K562 (cell line): ENCODE measurements at regions of chr3 and their contacts with region 1.

Region 1: DNA sequence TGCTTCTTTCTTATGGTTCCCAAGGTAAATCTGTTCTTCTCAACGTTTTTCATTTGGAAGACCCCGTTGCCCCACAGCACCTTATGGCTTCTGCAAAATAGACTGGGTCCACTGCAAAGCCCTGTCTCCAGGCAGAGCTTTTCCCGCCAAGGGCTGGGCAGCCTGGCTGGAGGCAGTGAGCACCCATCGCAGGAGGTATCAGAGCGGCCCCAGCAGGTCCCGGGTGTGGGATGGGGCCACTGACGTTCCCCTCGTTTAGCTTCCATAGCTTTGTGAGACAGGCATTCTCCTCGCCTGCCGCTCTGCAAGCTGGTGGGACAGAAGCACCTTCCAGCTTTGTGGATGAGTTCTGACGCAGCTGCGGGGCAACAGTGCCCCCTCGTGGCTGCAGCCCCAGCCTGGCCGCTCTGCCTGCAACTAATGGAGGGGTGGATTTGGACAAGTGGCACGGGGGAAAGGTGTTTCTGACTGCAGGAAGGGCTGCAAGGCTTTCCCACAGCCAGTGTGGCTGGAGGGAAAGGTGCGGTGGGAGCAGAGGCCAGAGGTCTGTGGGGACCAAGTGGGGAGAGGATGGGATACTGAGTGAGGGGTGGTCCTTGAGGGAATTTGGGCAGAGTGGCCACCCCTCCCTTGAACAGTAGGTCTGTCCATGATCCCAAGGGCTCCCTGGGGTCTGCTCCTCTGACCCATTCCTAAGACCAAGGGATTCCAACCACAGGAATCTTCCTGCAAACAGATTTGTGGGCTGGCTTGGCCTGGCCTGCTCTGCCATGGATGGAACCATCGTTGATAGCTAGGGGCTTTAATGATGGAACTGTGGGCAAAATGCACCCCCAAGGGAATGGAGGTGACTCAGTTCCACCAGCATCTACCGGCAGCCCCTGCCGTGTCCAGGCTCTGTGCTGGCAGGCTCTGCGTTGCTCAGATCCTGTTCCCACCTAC is 99.4 kb downstream of the FBLN2 start:
- DNase-seq: peak; percentile 89 to 93 (median 92)
- ATAC-seq: peak; percentile 76
- H3K4me3 ChIP-seq: no peak overlapping the region
- H3K27ac ChIP-seq: no peak overlapping the region
- H3K4me1 ChIP-seq: peaks cover 25 to 37% of the 10 kb centered on the region in 2 experiments; a peak in 4 of 5 replicates
- H3K27me3 ChIP-seq: peaks cover 20 to 41% of the 10 kb centered on the region in 2 experiments
- CTCF ChIP-seq: peak; percentile 97 to 100 (median 99)
- EP300 ChIP-seq: no peak
- POLR2A ChIP-seq: no peak
- RAD21 ChIP-seq: peak; percentile 99 to 100

Region 2: DNA sequence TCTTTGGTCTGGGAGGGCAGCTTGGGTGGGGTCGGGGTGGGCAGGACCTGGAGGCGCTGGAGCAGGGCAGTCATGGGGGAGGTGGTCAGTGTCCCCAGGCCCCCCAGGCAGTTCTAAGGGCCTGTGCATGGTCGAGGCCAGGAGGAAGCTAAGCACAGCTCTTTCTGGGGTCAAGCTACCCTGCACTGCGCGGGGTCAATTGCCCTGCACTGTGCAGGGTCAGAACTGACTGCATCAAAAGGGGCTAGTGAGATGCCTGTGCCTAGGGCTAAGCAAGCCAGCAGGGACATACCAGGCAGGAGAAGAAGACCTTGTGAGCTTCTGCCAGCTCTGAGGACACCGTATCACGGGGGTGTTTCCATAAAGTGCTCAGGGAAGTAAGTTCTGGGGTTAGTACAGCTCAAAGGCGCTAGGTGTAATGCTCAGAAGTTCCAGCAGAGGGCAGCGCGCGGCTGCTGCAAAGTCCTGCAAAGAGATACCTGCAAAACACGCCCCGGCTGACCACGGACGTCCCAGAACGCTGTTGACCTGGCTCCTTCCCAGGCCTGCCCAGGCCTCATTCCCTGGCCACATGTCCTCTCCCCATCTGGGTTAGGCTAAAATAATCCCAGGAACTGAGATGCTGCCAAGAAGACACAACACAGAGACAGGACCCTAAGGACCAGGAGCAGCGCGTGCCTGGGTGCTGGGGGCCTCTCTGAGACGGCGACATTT is 556.3 kb before region 1 on chr3:
- CTCF ChIA-PET with region 1: interaction called, 10 read pairs
- POLR2A ChIA-PET with region 1: interaction called, 3 read pairs
- in situ Hi-C with region 1: loop called (anchors 10 kb)
- intact Hi-C with region 1: loop called (anchors 1 kb)
- DNase-seq: peak; percentile 83 to 88 (median 85)
- ATAC-seq: peak; percentile 89
- H3K4me3 ChIP-seq: no peak overlapping the region
- H3K27ac ChIP-seq: no peak overlapping the region
- H3K4me1 ChIP-seq: peaks cover 2 to 21% of the 10 kb centered on the region in 2 experiments; a peak in 3 of 5 replicates
- H3K27me3 ChIP-seq: peaks cover 17 to 40% of the 10 kb centered on the region in 2 experiments; a peak in 4 of 5 replicates
- CTCF ChIP-seq: peak; percentile 94 to 98 (median 94)
- EP300 ChIP-seq: no peak
- POLR2A ChIP-seq: no peak
- RAD21 ChIP-seq: peak; percentile 86 to 91

Region 3: GRCh38 chr3:13282986-13283876 is 365.1 kb before region 1 on chr3:
- CTCF ChIA-PET with region 1: interaction called, 5 read pairs
- POLR2A ChIA-PET with region 1: no interaction called
- in situ Hi-C with region 1: no loop called
- intact Hi-C with region 1: loop called (anchors 10 kb)
- DNase-seq: peak; percentile 88 to 93 (median 91)
- ATAC-seq: peak; percentile 96
- H3K4me3 ChIP-seq: peak overlapping the region; percentile 34
- H3K27ac ChIP-seq: no peak overlapping the region
- H3K4me1 ChIP-seq: peaks cover 6 to 27% of the 10 kb centered on the region in 2 experiments; a peak in 4 of 5 replicates
- H3K27me3 ChIP-seq: peaks cover 13 to 52% of the 10 kb centered on the region in 2 experiments; a peak in 4 of 5 replicates
- CTCF ChIP-seq: peak; percentile 62 to 76 (median 67)
- EP300 ChIP-seq: no peak
- POLR2A ChIP-seq: no peak
- RAD21 ChIP-seq: peak in 1 of 2 experiments; percentile 63; a peak in 2 of 4 replicates

Region 4: DNA sequence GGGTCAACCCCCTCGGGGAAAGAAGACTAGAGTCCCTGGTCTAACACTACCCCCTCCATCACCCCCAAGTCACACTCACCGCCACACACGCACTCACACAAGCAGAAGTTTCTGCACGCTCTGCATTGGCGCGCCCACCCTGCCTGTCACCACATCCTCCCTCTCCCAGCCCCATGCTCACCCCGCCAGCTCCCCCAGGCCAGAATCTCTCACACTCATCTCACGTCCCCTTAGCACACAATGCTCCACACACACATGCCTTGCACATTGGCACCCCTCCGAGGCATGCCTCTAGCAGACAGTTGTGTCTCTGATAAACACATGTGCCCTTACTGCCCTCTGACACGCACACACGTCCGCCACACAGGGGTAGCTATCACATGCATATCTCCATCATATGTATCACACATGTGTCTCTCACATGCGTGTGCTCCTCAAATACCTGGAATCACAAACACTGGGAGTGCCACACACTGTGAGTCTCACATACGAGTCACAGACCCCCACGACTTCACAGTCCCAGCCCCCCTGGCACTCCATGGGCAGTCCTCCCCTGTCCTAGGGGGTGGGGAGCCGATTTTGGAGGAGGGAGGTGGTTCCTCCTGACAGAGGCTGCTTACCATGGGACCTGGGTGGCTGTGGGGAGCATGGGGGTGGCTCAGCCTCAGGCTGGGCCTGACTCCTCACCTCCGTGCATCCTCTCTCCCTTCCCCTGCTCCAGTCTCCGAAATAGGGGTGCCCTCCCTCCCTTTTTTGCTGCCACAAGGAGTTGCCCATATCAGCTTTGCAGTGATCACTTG is 98.5 kb before region 1 on chr3:
- CTCF ChIA-PET with region 1: interaction called, 4 read pairs
- POLR2A ChIA-PET with region 1: no interaction called
- in situ Hi-C with region 1: no loop called
- intact Hi-C with region 1: loop called (anchors 10 kb)
- DNase-seq: no peak
- ATAC-seq: no peak
- H3K4me3 ChIP-seq: no peak overlapping the region
- H3K27ac ChIP-seq: no peak overlapping the region
- H3K4me1 ChIP-seq: peaks cover 19 to 45% of the 10 kb centered on the region in 2 experiments; a peak in 4 of 5 replicates
- H3K27me3 ChIP-seq: peaks cover 12 to 46% of the 10 kb centered on the region in 2 experiments; a peak in 3 of 5 replicates
- CTCF ChIP-seq: no peak
- EP300 ChIP-seq: no peak
- POLR2A ChIP-seq: no peak
- RAD21 ChIP-seq: no peak

Region 5: DNA sequence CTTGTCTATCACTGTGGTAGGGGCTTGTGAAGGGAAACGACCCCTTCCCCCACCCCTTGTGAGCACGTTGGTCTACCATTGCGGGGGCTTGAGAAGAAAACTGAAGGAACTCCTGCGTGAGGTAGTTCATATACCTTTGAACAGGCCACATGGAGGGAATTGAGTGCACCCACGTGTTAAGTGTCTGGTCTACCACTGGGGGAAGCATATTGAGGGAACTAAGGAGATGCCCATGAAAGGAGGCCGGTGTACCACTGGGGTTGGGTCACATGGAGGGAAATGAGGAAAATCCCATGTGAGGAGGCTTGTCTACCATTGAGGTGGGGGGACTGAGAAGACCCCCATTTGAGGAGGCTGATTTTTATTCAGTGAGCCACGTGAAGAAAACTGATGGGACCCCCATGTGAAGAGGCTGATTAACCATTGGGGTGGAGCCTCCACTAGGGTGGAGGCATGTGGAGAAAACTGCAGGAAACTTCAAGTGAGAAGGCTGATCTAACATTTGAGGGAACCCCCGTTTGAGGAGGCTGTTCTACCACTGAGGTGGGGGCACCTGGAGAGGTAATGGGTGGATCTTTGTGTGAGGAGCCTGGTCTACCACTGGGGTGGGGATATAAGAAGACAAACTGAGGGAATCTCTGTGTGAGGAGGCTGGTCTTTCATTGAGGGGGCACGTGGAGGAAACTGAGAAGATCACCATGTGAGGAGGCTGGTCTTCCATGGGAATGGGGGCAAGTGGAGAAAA is 63.7 kb after region 1 on chr3:
- CTCF ChIA-PET with region 1: no interaction called
- POLR2A ChIA-PET with region 1: no interaction called
- in situ Hi-C with region 1: no loop called
- intact Hi-C with region 1: no loop called
- DNase-seq: no peak
- ATAC-seq: no peak
- H3K4me3 ChIP-seq: no peak overlapping the region
- H3K27ac ChIP-seq: no peak overlapping the region
- H3K4me1 ChIP-seq: no peaks in the 10 kb centered on the region
- H3K27me3 ChIP-seq: no peaks in the 10 kb centered on the region
- CTCF ChIP-seq: no peak
- EP300 ChIP-seq: no peak
- POLR2A ChIP-seq: no peak
- RAD21 ChIP-seq: no peak

Region 6: GRCh38 chr3:14124615-14125190 is 476.4 kb after region 1 on chr3 and contains the starts of genes CHCHD4 and TMEM43:
- CTCF ChIA-PET with region 1: no interaction called
- POLR2A ChIA-PET with region 1: no interaction called
- in situ Hi-C with region 1: no loop called
- intact Hi-C with region 1: loop called (anchors 10 kb)
- DNase-seq: peak; percentile 98 to 100 (median 99)
- ATAC-seq: peak; percentile 83
- H3K4me3 ChIP-seq: peak within 1 kb of the TSS; percentile 72
- H3K27ac ChIP-seq: peak within 1 kb of the TSS; percentile 86
- H3K4me1 ChIP-seq: peaks cover 35 to 45% of the 10 kb centered on the region in 2 experiments
- H3K27me3 ChIP-seq: no peaks in the 10 kb centered on the region
- CTCF ChIP-seq: no peak
- EP300 ChIP-seq: peak; percentile 8; the same call in 1 of the 2 replicates
- POLR2A ChIP-seq: peak; percentile 79
- RAD21 ChIP-seq: no peak
- polyA plus RNA-seq, gene CHCHD4: 152 to 225 TPM
- polyA plus RNA-seq, gene TMEM43: 16.7 to 29.4 TPM